A673 (cell line): ENCODE measurements at regions of chr16 and their contacts with region 1.

Region 1: GRCh38 chr16:64089697-64090096 is 1032.2 kb downstream of the CDH11 start:
- DNase-seq: peak; percentile 59
- H3K4me3 ChIP-seq: no peak overlapping the region
- H3K27ac ChIP-seq: no peak overlapping the region
- H3K4me1 ChIP-seq: no peaks in the 10 kb centered on the region
- H3K27me3 ChIP-seq: no peaks in the 10 kb centered on the region
- CTCF ChIP-seq: peak; percentile 73

Region 2: GRCh38 chr16:64983963-64984362 is 894.3 kb after region 1 on chr16:
- CTCF ChIA-PET with region 1: no interaction called
- POLR2A ChIA-PET with region 1: no interaction called
- intact Hi-C with region 1: loop called (anchors 10 kb)
- DNase-seq: peak; percentile 83
- H3K4me3 ChIP-seq: no peak overlapping the region
- H3K27ac ChIP-seq: no peak overlapping the region
- H3K4me1 ChIP-seq: peaks cover 18% of the 10 kb centered on the region
- H3K27me3 ChIP-seq: no peaks in the 10 kb centered on the region
- CTCF ChIP-seq: peak; percentile 77